B cell (primary cell): ENCODE measurements at regions of chr16 and their contacts with region 1.

Region 1: DNA sequence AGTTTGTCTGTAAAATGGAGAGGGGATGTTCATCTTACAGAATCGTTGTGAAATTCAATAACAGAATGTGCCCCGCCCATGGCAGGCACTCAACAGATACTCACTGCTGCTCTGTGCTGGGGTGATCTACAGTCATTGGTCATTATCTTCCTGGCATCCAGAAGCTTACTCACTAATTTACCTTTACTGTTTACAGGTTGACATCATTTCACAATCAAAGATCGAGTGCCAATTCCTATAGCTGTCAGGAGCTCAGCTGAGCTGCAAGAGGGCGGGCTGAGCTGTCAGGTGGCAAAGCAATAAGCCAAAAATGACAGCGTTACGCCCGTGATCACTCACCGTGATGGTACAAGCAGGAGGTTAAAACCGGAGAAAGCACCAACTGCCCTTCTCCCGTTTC is 51.2 kb downstream of the LITAF start:
- DNase-seq: no peak
- ATAC-seq: no peak
- H3K4me3 ChIP-seq: no peak overlapping the region
- H3K4me3 Mint-ChIP-seq: no peak overlapping the region
- H3K27ac ChIP-seq: no peak overlapping the region
- H3K27ac Mint-ChIP-seq: no peak overlapping the region
- H3K4me1 ChIP-seq: no peaks in the 10 kb centered on the region
- H3K4me1 Mint-ChIP-seq: peaks cover 5% of the 10 kb centered on the region
- H3K27me3 ChIP-seq: no peaks in the 10 kb centered on the region
- H3K27me3 Mint-ChIP-seq: no peaks in the 10 kb centered on the region
- CTCF ChIP-seq: no peak

Region 2: DNA sequence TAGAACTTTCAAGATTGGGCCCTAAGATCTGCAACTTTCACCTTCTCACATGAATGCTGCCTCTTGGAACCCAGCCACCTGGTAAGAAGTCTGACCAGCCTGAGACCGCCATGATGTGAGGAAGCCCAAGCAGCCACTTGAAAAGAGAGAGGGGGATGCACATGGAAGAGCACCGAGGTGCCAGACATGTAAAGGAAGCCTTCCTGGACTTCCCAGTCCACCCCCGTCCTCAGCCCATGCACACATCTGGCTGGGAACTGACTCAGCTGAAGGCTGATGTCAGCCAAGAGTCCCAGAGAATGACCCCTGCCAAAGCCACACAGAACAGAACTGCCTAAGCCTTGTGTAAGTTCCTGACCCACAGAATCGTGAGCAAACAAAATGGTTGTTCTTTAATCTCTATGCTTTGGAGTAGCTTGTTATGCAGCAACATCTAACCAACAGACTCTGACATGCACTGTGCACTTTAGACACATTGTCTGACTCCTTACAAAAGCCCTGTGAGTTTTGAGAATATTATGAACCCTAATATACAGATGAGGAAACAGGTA is 103.5 kb before region 1 on chr16:
- CTCF ChIA-PET with region 1: no interaction called
- POLR2A ChIA-PET with region 1: no interaction called
- intact Hi-C with region 1: no loop called
- DNase-seq: no peak
- ATAC-seq: no peak
- H3K4me3 ChIP-seq: no peak overlapping the region
- H3K4me3 Mint-ChIP-seq: no peak overlapping the region
- H3K27ac ChIP-seq: no peak overlapping the region
- H3K27ac Mint-ChIP-seq: no peak overlapping the region
- H3K4me1 ChIP-seq: no peaks in the 10 kb centered on the region
- H3K4me1 Mint-ChIP-seq: no peaks in the 10 kb centered on the region
- H3K27me3 ChIP-seq: peaks cover 0 to 5% (median 2%) of the 10 kb centered on the region in 4 experiments
- H3K27me3 Mint-ChIP-seq: no peaks in the 10 kb centered on the region
- CTCF ChIP-seq: no peak

Region 3: GRCh38 chr16:11506741-11507305 is 28.6 kb before region 1 on chr16:
- CTCF ChIA-PET with region 1: interaction called, 11 read pairs
- POLR2A ChIA-PET with region 1: interaction called, 3 read pairs
- intact Hi-C with region 1: no loop called
- DNase-seq: peak; percentile 71
- ATAC-seq: peak; percentile 83
- H3K4me3 ChIP-seq: peak overlapping the region in 4 of 5 experiments; percentile 24 to 49 (median 41)
- H3K4me3 Mint-ChIP-seq: peak overlapping the region; percentile 86
- H3K27ac ChIP-seq: peak overlapping the region; percentile 26 to 48
- H3K27ac Mint-ChIP-seq: peak overlapping the region; percentile 83
- H3K4me1 ChIP-seq: peaks cover 8 to 13% of the 10 kb centered on the region in 2 donors
- H3K4me1 Mint-ChIP-seq: peaks cover 15% of the 10 kb centered on the region
- H3K27me3 ChIP-seq: no peaks in the 10 kb centered on the region
- H3K27me3 Mint-ChIP-seq: no peaks in the 10 kb centered on the region
- CTCF ChIP-seq: peak; percentile 46

Region 4: GRCh38 chr16:11621920-11622651 is 86.6 kb after region 1 on chr16:
- CTCF ChIA-PET with region 1: interaction called, 13 read pairs
- POLR2A ChIA-PET with region 1: interaction called, 5 read pairs
- intact Hi-C with region 1: no loop called
- DNase-seq: peak; percentile 54
- ATAC-seq: peak; percentile 63
- H3K4me3 ChIP-seq: peak overlapping the region in 4 of 5 experiments; percentile 9 to 63 (median 36)
- H3K4me3 Mint-ChIP-seq: peak overlapping the region; percentile 77
- H3K27ac ChIP-seq: peak overlapping the region; percentile 68 to 84
- H3K27ac Mint-ChIP-seq: peak overlapping the region; percentile 85
- H3K4me1 ChIP-seq: peaks cover 52 to 75% of the 10 kb centered on the region in 2 donors
- H3K4me1 Mint-ChIP-seq: peaks cover 52% of the 10 kb centered on the region
- H3K27me3 ChIP-seq: no peaks in the 10 kb centered on the region
- H3K27me3 Mint-ChIP-seq: no peaks in the 10 kb centered on the region
- CTCF ChIP-seq: no peak

Region 5: GRCh38 chr16:11632464-11632939 is 97.0 kb after region 1 on chr16:
- CTCF ChIA-PET with region 1: interaction called, 13 read pairs
- POLR2A ChIA-PET with region 1: interaction called, 3 read pairs
- intact Hi-C with region 1: no loop called
- DNase-seq: no peak
- ATAC-seq: no peak
- H3K4me3 ChIP-seq: no peak overlapping the region
- H3K4me3 Mint-ChIP-seq: no peak overlapping the region
- H3K27ac ChIP-seq: no peak overlapping the region
- H3K27ac Mint-ChIP-seq: no peak overlapping the region
- H3K4me1 ChIP-seq: peaks cover 22 to 41% of the 10 kb centered on the region in 2 donors
- H3K4me1 Mint-ChIP-seq: peaks cover 33% of the 10 kb centered on the region
- H3K27me3 ChIP-seq: no peaks in the 10 kb centered on the region
- H3K27me3 Mint-ChIP-seq: no peaks in the 10 kb centered on the region
- CTCF ChIP-seq: no peak

Region 6: GRCh38 chr16:11651796-11652195 is 116.3 kb after region 1 on chr16:
- CTCF ChIA-PET with region 1: interaction called, 12 read pairs
- POLR2A ChIA-PET with region 1: interaction called, 5 read pairs
- intact Hi-C with region 1: no loop called
- DNase-seq: no peak
- ATAC-seq: peak; percentile 28
- H3K4me3 ChIP-seq: no peak overlapping the region
- H3K4me3 Mint-ChIP-seq: no peak overlapping the region
- H3K27ac ChIP-seq: no peak overlapping the region
- H3K27ac Mint-ChIP-seq: no peak overlapping the region
- H3K4me1 ChIP-seq: no peaks in the 10 kb centered on the region
- H3K4me1 Mint-ChIP-seq: peaks cover 11% of the 10 kb centered on the region
- H3K27me3 ChIP-seq: no peaks in the 10 kb centered on the region
- H3K27me3 Mint-ChIP-seq: no peaks in the 10 kb centered on the region
- CTCF ChIP-seq: no peak